ENCODE measurements at regions of chr4 and their contacts with region 1.

Region 1: GRCh38 chr4:143513306-143514168 is at the start of gene SMARCA5:
- DNase-seq: peak; percentile 92
- H3K4me3 ChIP-seq: peak within 1 kb of the TSS; percentile 91
- H3K27me3 ChIP-seq: peaks cover 2% of the 10 kb centered on the region; the same call in 1 of the 2 replicates
- CTCF ChIP-seq: no peak
- polyA plus RNA-seq, gene SMARCA5: 6.3 and 13.3 TPM in 2 replicates

Region 2: DNA sequence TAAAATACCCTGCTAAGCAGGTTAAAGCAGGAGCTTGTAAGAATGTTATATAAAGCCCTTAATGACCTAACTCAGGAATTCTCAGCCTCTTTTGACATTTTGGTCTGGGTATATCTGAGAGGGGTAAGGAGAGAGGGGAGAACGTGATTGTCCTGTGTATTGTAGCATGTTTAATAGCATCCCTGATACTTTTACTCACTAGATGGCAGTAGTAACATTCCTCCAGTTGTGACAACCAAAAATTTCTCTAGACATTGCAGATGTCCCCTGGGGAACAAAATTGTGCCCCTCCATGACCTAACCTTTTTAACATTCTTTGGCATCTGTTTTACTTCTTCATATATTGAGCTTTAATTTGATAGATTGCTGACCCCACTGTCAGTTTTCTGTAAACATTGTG is 17.8 kb after region 1 on chr4:
- CTCF ChIA-PET with region 1: interaction called, 11 read pairs
- POLR2A ChIA-PET with region 1: no interaction called
- DNase-seq: no peak
- H3K4me3 ChIP-seq: no peak overlapping the region
- H3K27me3 ChIP-seq: no peaks in the 10 kb centered on the region
- CTCF ChIP-seq: peak; percentile 50